Activated CD8-positive, alpha-beta memory T cell treated with anti-CD3 and anti-CD28 coated beads, Interleukin-2, amount 10 ng/mL, durations not matched to agents 7 days and 5 days (primary cell): ENCODE measurements at regions of chr5 and their contacts with region 1.

Region 1: DNA sequence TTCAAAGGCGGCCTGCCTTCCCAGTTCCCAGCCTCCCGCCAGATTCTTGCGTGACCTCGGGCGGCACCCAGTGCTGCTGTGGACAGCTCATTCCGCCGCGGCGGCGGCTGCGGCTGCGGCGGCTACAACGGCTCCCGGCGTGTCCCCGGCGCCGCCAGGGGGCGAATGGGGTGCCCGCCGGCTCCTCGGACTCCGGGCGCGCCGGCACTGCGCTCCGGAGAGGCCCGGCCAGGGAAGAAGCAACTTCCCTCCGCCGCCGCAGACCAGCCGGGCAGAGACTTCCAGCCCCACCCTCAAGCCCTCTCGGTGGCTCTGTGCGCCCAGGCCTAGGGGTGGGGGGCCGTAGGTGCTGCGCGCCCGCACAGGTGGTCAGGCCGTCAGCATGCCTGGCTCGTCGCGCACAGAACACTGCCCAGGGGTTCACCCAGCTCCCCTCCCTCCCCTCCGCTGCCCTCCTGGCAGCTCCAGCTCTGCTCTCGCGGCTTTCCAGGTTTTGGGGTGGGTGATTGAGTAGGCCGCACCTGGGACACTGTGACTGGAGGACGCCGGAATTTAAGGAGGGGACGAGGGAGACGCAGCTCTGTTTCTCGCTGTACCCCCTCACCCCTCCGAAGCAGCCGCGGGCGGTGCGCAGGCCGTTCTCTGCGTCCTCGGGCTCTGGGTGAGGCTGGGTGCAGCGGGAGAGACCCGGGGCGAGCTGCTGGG is 20.2 kb downstream of the IGIP start:
- DNase-seq: peak; percentile 59
- ATAC-seq: peak; percentile 81
- H3K4me3 Mint-ChIP-seq: peak overlapping the region; percentile 9
- H3K27ac Mint-ChIP-seq: no peak overlapping the region
- H3K4me1 Mint-ChIP-seq: peaks cover 12% of the 10 kb centered on the region
- H3K27me3 Mint-ChIP-seq: peaks cover 29% of the 10 kb centered on the region

Region 2: DNA sequence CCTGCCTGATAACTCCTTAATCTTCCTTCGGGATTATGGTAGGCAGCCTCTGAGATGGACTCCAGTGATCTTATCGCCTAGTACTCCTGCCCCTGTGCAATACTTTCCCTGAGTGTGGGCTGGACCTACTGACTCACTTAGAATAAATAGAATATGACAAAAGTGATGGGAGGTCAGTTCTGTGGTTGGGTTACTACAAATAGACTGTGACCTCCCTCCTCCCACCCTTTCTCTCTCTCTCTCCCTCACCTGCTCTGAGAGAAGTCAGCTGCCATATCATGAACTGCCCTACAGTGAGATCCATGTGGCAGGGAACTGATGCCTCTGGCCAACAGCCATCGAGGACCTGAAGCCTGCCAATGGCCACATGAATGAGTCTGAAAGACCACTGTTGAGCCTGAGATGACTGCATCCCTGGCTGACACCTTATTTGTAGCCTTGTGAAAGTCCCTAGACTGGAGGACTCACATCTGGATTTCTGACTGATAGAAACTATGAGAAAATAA is 134.6 kb before region 1 on chr5:
- CTCF ChIA-PET with region 1: no interaction called
- DNase-seq: no peak
- ATAC-seq: no peak
- H3K4me3 Mint-ChIP-seq: no peak overlapping the region
- H3K27ac Mint-ChIP-seq: no peak overlapping the region
- H3K4me1 Mint-ChIP-seq: no peaks in the 10 kb centered on the region
- H3K27me3 Mint-ChIP-seq: peaks cover 17% of the 10 kb centered on the region

Region 3: GRCh38 chr5:140073296-140073695 is 72.7 kb before region 1 on chr5:
- CTCF ChIA-PET with region 1: interaction called, 86 read pairs
- DNase-seq: no peak
- ATAC-seq: no peak
- H3K4me3 Mint-ChIP-seq: no peak overlapping the region
- H3K27ac Mint-ChIP-seq: no peak overlapping the region
- H3K4me1 Mint-ChIP-seq: peaks cover 2% of the 10 kb centered on the region
- H3K27me3 Mint-ChIP-seq: peaks cover 51% of the 10 kb centered on the region

Region 4: DNA sequence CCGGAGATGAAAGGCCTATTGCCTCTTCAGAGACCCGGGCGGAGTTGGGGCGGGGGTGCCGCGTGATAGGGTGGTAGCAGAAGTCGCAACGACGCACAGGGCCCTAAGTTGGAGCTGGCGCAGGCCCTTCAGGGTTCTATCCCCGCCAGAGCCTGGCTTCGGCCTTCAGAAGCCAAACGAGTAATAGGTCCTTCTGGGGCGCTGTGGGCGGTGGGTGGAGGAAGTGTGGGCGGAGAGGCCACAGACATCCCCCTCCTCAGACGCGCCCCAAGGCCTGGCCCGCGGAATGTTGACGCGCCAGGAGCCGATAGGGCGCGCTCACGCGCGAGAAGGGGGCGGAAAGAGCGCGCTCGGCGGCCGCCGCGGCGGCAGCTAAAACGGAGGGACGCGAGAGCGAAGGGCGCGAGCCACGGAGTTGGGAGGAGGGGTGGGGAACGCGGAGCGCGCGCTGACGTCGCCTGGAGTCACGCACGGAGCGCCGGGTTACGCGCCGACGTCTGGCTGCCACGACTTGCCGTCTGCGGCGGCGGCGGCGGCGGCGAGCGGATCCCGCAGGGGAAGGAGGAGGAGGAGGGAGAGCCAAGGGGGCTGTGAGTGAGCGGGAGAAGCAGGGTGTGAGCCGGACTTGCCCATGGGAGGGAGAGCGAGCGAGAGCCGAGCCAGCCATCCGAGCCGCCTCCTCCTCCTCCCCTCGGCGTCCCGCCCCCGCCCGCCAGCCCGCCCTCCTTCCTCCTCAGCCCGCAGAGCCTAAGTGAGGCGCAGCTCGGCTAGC is 38.5 kb before region 1 on chr5:
- CTCF ChIA-PET with region 1: interaction called, 130 read pairs
- DNase-seq: peak; percentile 96
- ATAC-seq: peak; percentile 89
- H3K4me3 Mint-ChIP-seq: peak overlapping the region; percentile 99
- H3K27ac Mint-ChIP-seq: peak overlapping the region; percentile 98
- H3K4me1 Mint-ChIP-seq: peaks cover 42% of the 10 kb centered on the region
- H3K27me3 Mint-ChIP-seq: peaks cover 27% of the 10 kb centered on the region

Region 5: DNA sequence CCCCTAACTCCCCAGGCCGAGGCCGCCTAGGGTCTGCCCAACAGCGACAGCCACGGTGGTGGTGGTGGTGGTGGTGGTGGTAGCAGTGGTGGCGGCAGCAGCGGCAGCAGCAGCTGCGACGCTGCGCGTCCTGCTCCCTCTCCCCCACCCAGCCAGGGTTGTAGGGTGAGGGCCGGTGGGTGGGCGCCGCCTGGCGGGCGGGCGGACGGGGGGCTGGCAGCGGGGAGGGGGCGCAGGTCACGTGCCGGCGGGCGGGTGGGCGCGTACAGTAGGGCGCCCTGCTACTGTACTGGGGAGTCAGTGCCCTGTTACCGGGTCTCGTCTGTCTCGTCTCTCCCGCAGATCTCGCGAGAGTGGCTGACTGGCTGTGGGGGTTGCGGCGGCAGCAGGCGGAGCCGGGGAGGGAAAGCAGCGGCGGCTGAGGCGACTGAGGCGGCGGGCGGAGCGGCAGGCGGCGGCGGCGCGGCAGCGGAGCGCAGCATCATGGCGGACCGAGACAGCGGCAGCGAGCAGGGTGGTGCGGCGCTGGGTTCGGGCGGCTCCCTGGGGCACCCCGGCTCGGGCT is 32.2 kb before region 1 on chr5 and contains the start of gene PURA:
- CTCF ChIA-PET with region 1: interaction called, 130 read pairs
- DNase-seq: peak; percentile 98
- ATAC-seq: peak; percentile 89
- H3K4me3 Mint-ChIP-seq: peak within 1 kb of the TSS; percentile 93
- H3K27ac Mint-ChIP-seq: peak within 1 kb of the TSS; percentile 95
- H3K4me1 Mint-ChIP-seq: peaks cover 65% of the 10 kb centered on the region
- H3K27me3 Mint-ChIP-seq: peaks cover 18% of the 10 kb centered on the region
- total RNA-seq, gene PURA: 12.3 to 15.4 TPM

Region 6: DNA sequence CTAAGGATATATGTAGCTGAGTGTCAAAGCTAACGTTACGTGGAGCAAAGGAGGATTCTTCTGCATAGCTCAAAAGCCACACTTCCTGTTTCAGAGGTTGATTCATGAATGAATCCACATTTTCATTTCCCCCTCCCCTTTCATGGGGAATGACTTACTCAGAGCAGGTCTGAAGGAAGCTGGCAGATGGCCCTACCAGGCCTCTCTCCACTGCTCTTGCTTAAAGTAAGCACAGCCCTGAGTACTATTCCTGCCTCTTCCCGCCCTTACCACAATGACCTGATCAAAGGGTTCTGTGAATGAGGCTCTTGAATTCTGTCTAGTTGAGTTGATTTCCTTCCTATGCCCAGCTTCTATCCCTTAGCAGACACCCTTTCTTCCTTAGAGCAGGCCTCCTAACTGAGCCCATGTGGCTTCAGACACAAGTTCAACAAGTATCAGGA is 14.0 kb before region 1 on chr5:
- CTCF ChIA-PET with region 1: interaction called, 45 read pairs
- DNase-seq: peak; percentile 38
- ATAC-seq: peak; percentile 47
- H3K4me3 Mint-ChIP-seq: no peak overlapping the region
- H3K27ac Mint-ChIP-seq: no peak overlapping the region
- H3K4me1 Mint-ChIP-seq: peaks cover 22% of the 10 kb centered on the region
- H3K27me3 Mint-ChIP-seq: no peaks in the 10 kb centered on the region

Region 7: DNA sequence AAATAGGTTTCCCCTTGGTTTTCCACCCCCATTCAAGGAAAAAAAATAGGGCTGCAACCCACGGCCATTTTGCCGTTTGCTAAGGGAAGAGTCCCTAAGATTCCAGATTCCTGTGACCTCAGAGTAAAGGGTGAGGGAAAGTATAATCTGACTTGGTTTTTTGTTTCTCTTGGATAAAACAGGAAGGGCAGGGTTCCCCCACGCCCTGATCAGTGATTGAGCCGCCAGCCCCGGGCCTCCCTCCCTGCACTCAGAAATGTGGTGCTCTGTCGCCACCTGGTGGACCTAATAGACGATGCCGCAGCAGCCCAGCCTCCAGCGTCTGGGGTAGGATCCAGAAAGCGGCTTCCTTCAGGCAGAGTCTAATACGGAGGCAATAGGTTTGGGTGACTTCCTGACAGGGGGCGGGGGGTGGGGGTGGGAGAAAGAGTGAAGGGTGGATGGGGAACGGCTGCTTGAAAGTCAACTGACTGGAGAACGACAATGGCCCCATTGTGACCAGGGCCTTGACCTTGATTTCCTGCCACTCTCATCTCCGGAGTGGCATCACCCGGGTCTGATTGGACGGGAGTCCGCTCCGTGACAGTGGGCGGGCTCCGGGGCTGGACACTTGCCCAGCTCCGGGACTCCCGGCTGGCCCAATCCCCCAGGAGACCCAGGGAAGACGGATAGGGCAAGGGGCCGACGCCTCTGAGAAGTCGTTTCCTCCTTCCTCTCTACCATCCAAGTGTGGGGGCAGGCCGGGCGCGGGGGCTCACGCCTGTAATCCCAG is 11.2 kb after region 1 on chr5:
- CTCF ChIA-PET with region 1: interaction called, 69 read pairs
- DNase-seq: peak; percentile 91
- ATAC-seq: peak; percentile 99
- H3K4me3 Mint-ChIP-seq: peak overlapping the region; percentile 57
- H3K27ac Mint-ChIP-seq: peak overlapping the region; percentile 46
- H3K4me1 Mint-ChIP-seq: peaks cover 6% of the 10 kb centered on the region
- H3K27me3 Mint-ChIP-seq: no peaks in the 10 kb centered on the region